ENCODE measurements at regions of chr17 and their contacts with region 1.

Region 1: DNA sequence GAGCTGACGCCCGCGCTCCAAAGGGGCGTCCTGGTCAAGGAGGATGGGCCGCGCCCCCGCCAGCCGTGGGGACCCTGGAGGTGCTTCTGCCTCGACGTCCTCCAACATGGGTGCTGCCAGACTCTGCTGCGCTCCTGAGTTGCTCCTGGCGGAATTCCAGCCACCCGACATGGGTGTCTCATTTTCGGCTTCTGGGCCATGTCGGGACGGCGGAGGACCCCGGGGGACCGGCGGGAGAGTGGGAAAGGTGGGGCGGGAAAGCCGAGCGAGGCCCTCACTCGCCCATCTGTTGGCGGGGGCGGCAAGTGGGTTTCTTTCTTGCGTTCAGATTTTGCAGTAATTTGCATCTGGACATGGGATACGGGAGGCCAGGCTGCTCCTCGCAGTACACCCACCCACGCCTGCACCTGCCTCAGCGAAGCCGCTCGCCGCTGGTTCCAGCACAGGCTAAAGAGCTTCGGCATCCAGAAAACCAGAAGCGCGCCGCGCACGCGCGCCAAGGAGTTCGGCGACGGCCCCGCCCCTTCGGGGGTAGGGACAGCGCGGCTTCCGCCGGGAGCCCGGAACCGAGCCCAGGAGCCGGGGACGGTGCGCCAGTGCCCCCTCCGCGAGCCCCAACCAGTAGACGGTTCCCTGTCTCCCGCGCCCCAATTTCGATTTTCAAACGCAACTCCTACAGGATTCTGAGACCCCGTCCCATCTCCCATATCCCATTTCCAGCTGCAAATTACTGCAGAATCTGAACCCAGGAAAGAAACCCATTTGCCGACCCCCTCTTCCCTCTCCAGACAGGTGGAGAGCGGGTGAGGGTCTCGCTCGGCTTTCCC is at the start of gene ARMC7:
- DNase-seq: peak; percentile 95
- ATAC-seq: peak; percentile 68
- H3K4me3 Mint-ChIP-seq: peak within 1 kb of the TSS; percentile 90
- H3K27ac Mint-ChIP-seq: peak within 1 kb of the TSS; percentile 94
- H3K4me1 Mint-ChIP-seq: peaks cover 25% of the 10 kb centered on the region
- H3K27me3 Mint-ChIP-seq: no peaks in the 10 kb centered on the region
- CTCF ChIP-seq: no peak
- total RNA-seq, gene ARMC7: 13.2 to 15.9 TPM (median 14.8 TPM) in 3 replicates

Region 2: DNA sequence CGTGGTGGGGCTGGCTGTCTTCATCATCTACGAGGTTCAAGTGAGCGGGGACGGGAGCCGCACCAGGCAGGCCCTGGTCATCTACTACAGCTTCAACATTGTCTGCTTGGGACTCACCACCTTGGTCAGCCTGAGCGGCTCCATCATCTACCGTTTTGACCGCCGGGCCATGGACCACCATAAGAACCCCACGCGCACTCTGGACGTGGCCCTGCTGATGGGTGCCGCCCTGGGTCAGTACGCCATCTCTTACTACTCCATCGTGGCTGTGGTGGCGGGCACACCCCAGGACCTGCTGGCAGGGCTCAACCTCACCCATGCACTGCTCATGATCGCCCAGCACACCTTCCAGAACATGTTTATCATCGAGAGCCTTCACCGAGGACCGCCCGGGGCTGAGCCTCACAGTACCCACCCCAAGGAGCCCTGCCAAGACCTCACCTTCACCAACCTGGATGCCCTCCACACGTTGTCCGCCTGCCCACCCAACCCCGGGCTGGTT is 179.0 kb before region 1 on chr17:
- CTCF ChIA-PET with region 1: no interaction called
- POLR2A ChIA-PET with region 1: no interaction called
- DNase-seq: peak; percentile 6
- ATAC-seq: no peak
- H3K4me3 Mint-ChIP-seq: no peak overlapping the region
- H3K27ac Mint-ChIP-seq: no peak overlapping the region
- H3K4me1 Mint-ChIP-seq: no peaks in the 10 kb centered on the region; the same call in 1 of the 2 replicates
- H3K27me3 Mint-ChIP-seq: peaks cover 91% of the 10 kb centered on the region
- CTCF ChIP-seq: no peak

Region 3: DNA sequence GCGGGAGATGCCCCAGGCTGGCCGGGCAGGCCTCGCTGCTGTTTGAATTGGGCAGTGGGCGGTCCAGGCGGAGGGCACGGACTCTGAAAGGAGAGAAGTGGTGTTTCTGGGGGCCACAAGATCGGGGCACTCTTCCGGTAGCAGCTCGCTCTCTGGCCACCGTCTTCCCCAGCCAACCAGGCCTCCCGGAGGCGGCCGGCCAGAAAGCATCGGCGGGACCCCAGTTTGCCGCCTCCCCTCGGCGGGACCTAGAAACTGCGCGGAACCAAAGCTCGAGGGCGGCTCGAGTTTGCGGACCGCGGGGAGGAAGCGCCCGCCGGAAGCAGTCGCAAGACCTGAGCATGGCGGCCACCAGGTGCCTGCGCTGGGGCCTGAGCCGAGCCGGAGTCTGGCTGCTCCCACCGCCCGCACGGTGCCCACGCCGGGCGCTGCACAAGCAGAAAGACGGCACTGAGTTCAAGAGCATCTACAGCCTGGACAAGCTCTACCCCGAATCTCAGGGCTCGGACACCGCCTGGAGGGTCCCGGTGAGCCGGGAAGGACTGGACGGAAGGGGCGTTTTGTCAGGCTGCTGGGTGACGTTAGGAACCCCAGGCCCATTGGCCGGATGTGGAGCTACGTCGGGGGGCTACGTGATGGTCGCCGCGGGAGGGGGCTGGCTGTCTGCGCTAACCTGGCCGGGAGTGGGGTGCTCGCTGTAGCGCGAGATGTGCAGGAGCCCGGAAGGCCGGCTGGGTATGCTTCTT is 97.1 kb before region 1 on chr17 and contains the start of gene MRPL58:
- CTCF ChIA-PET with region 1: interaction called, 11 read pairs
- POLR2A ChIA-PET with region 1: interaction called, 3 read pairs
- DNase-seq: peak; percentile 94
- ATAC-seq: peak; percentile 81
- H3K4me3 Mint-ChIP-seq: peak within 1 kb of the TSS; percentile 73
- H3K27ac Mint-ChIP-seq: peak within 1 kb of the TSS; percentile 99
- H3K4me1 Mint-ChIP-seq: peaks cover 26% of the 10 kb centered on the region
- H3K27me3 Mint-ChIP-seq: no peaks in the 10 kb centered on the region
- CTCF ChIP-seq: no peak
- total RNA-seq, gene MRPL58: 41.8 to 43.7 TPM (median 41.9 TPM) in 3 replicates

Region 4: GRCh38 chr17:75059369-75060345 is 50.0 kb before region 1 on chr17:
- CTCF ChIA-PET with region 1: interaction called, 32 read pairs
- POLR2A ChIA-PET with region 1: no interaction called
- DNase-seq: no peak
- ATAC-seq: peak; percentile 55
- H3K4me3 Mint-ChIP-seq: no peak overlapping the region
- H3K27ac Mint-ChIP-seq: peak overlapping the region; percentile 15; the same call in 1 of the 2 replicates
- H3K4me1 Mint-ChIP-seq: no peaks in the 10 kb centered on the region
- H3K27me3 Mint-ChIP-seq: no peaks in the 10 kb centered on the region
- CTCF ChIP-seq: no peak

Region 5: GRCh38 chr17:75087558-75088453 is 21.8 kb before region 1 on chr17 and contains the start of gene SLC16A5:
- CTCF ChIA-PET with region 1: interaction called, 32 read pairs
- POLR2A ChIA-PET with region 1: interaction called, 8 read pairs
- DNase-seq: peak; percentile 95
- ATAC-seq: peak; percentile 85
- H3K4me3 Mint-ChIP-seq: peak within 1 kb of the TSS; percentile 86
- H3K27ac Mint-ChIP-seq: peak within 1 kb of the TSS; percentile 97
- H3K4me1 Mint-ChIP-seq: peaks cover 68% of the 10 kb centered on the region
- H3K27me3 Mint-ChIP-seq: no peaks in the 10 kb centered on the region; the same call in 1 of the 2 replicates
- CTCF ChIP-seq: no peak
- total RNA-seq, gene SLC16A5: 32.4 to 33.5 TPM (median 33.1 TPM) in 3 replicates

Region 6: GRCh38 chr17:75131280-75132017 is 21.8 kb after region 1 on chr17 and contains the start of gene NT5C:
- CTCF ChIA-PET with region 1: interaction called, 84 read pairs
- POLR2A ChIA-PET with region 1: interaction called, 8 read pairs
- DNase-seq: peak; percentile 87
- ATAC-seq: peak; percentile 75
- H3K4me3 Mint-ChIP-seq: peak within 1 kb of the TSS; percentile 84
- H3K27ac Mint-ChIP-seq: peak within 1 kb of the TSS; percentile 93
- H3K4me1 Mint-ChIP-seq: peaks cover 20% of the 10 kb centered on the region
- H3K27me3 Mint-ChIP-seq: no peaks in the 10 kb centered on the region
- CTCF ChIP-seq: peak; percentile 59
- total RNA-seq, gene NT5C: 91.0 to 102 TPM (median 96.9 TPM) in 3 replicates

Region 7: GRCh38 chr17:75199886-75200618 is 90.4 kb after region 1 on chr17:
- CTCF ChIA-PET with region 1: interaction called, 79 read pairs
- POLR2A ChIA-PET with region 1: interaction called, 5 read pairs
- DNase-seq: no peak
- ATAC-seq: no peak
- H3K4me3 Mint-ChIP-seq: no peak overlapping the region
- H3K27ac Mint-ChIP-seq: no peak overlapping the region
- H3K4me1 Mint-ChIP-seq: 0 out of 2 replicates have a peak, but pooled peaks cover 2% of the 10 kb centered on the region
- H3K27me3 Mint-ChIP-seq: peaks cover 2% of the 10 kb centered on the region; the same call in 1 of the 2 replicates
- CTCF ChIP-seq: no peak

Region 8: DNA sequence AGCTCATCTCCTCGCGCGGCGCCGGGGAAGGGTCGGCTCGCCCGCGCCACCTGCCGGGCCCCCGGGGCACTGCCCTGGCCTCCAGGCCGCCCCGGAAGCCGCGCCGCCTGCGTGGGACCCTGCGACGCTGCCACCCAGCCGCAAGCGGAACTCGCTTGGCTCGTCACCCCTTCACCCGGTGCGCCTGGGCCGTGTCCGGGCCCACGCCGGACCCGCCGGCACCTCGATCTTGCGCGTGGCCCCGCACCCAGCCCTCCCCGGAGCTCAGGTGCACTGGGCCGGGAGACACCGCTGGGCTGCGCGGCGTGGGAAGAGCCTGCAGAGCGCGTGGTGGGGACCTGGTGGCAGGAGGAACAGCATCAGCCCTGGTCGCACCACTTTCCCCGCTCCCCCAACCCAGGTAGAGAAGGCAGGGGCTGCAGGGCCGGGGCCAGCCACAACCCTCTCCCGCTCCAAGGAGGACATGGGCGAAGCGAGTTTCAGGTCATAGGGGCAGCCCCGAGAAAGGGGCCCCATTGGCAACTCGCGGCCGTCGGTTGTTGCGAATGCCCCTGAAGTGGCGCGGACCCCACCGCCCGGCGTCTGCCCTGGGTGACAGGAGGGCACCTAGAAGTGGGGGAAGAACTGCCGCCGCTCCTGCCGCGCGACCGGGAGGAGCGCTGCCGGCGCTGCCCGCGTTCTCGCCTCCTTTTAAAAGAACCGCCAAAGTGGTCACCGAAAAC is 161.8 kb after region 1 on chr17:
- CTCF ChIA-PET with region 1: interaction called, 18 read pairs
- POLR2A ChIA-PET with region 1: interaction called, 4 read pairs
- DNase-seq: peak; percentile 78
- ATAC-seq: peak; percentile 31
- H3K4me3 Mint-ChIP-seq: peak overlapping the region; percentile 79
- H3K27ac Mint-ChIP-seq: no peak overlapping the region
- H3K4me1 Mint-ChIP-seq: peaks cover 19% of the 10 kb centered on the region
- H3K27me3 Mint-ChIP-seq: no peaks in the 10 kb centered on the region
- CTCF ChIP-seq: peak; percentile 83

Region 9: DNA sequence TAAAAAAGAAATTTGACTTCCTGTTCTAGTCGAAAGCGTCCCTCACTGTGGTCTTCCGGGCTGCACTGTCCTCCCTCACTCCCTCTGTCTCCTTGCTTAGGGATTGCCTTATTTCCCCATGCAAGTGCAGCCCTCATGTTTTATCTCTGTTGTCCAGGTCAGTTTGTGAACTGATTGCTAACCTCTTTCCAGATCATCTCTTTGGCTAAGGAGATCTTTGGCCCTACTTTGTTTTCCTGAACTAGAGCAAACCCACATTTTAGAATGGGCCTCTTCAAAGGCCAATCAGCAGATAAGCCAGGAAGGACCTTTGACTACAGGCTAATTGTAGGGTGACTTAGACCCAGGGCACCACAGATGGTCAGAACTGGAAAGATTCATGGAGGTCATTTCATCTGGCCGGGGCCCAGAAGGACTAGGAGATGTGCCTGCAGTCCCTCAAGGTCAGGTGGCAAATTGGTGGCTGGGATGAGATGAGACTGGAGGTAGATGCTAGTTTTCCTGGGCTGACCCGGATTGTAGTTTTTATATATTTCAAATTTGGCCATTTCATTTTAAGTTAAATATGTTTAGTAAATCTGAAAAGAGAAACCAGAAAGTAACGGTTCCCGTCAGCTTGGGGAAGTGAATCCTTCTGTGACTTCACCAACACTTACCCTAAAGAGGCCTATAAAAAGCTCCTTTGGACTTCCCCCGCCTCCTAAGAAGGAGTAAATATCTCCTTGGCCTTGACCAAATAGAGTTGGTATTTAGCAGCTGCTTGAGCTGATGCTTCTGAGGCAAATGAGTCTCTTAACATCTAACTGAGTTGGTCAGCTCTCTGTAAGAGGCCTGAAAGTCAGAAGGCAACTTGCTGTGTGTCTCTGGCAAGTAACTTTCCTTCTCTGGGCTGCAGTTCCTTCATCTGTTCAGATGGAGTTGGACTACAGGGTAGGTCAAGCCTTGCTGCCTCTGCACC is 185.9 kb after region 1 on chr17:
- CTCF ChIA-PET with region 1: no interaction called
- POLR2A ChIA-PET with region 1: no interaction called
- DNase-seq: no peak
- ATAC-seq: no peak
- H3K4me3 Mint-ChIP-seq: no peak overlapping the region
- H3K27ac Mint-ChIP-seq: no peak overlapping the region
- H3K4me1 Mint-ChIP-seq: no peaks in the 10 kb centered on the region
- H3K27me3 Mint-ChIP-seq: no peaks in the 10 kb centered on the region
- CTCF ChIP-seq: no peak